Activated CD4-positive, alpha-beta T cell treated with anti-CD3 and anti-CD28 coated beads, Interleukin-2, amount 10 ng/mL, durations not matched to agents 24 days and 14 days (primary cell): ENCODE measurements at regions of chr15 and their contacts with region 1.

Region 1: GRCh38 chr15:63891079-63891767 is 57.5 kb upstream of the HERC1 start:
- DNase-seq: peak; percentile 92
- H3K4me3 Mint-ChIP-seq: peak overlapping the region; percentile 68
- H3K27ac Mint-ChIP-seq: peak overlapping the region; percentile 27
- H3K4me1 Mint-ChIP-seq: peaks cover 53% of the 10 kb centered on the region
- H3K27me3 Mint-ChIP-seq: no peaks in the 10 kb centered on the region

Region 2: GRCh38 chr15:63668601-63669000 is 222.6 kb before region 1 on chr15:
- intact Hi-C with region 1: loop called (anchors 5 kb)
- DNase-seq: no peak
- H3K4me3 Mint-ChIP-seq: peak overlapping the region; percentile 80
- H3K27ac Mint-ChIP-seq: peak overlapping the region; percentile 81
- H3K4me1 Mint-ChIP-seq: peaks cover 43% of the 10 kb centered on the region
- H3K27me3 Mint-ChIP-seq: no peaks in the 10 kb centered on the region

Region 3: DNA sequence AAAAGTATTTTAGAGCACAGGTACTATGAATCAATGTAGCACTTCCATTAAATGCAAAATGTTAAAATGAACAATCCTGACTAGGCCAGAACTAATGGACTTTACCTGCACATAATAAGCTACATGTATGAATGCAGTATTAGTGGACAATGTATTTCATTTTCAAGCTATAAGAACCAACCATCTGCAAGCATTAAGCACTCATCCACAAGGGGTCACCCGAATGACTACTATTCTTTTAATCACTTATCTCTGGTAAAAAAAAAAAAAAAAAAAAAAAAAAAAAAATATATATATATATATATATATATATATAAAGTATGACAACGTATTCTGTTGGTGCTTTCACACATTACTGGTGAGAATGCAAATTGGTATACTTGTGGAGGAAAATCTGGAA is 64.7 kb before region 1 on chr15:
- intact Hi-C with region 1: loop called (anchors 1 kb)
- DNase-seq: peak; percentile 67
- H3K4me3 Mint-ChIP-seq: peak overlapping the region; percentile 67
- H3K27ac Mint-ChIP-seq: peak overlapping the region; percentile 78
- H3K4me1 Mint-ChIP-seq: peaks cover 55% of the 10 kb centered on the region
- H3K27me3 Mint-ChIP-seq: no peaks in the 10 kb centered on the region

Region 4: GRCh38 chr15:63870403-63871209 is 20.6 kb before region 1 on chr15:
- intact Hi-C with region 1: loop called (anchors 1 kb)
- DNase-seq: no peak
- H3K4me3 Mint-ChIP-seq: no peak overlapping the region
- H3K27ac Mint-ChIP-seq: no peak overlapping the region
- H3K4me1 Mint-ChIP-seq: peaks cover 19% of the 10 kb centered on the region
- H3K27me3 Mint-ChIP-seq: no peaks in the 10 kb centered on the region

Region 5: DNA sequence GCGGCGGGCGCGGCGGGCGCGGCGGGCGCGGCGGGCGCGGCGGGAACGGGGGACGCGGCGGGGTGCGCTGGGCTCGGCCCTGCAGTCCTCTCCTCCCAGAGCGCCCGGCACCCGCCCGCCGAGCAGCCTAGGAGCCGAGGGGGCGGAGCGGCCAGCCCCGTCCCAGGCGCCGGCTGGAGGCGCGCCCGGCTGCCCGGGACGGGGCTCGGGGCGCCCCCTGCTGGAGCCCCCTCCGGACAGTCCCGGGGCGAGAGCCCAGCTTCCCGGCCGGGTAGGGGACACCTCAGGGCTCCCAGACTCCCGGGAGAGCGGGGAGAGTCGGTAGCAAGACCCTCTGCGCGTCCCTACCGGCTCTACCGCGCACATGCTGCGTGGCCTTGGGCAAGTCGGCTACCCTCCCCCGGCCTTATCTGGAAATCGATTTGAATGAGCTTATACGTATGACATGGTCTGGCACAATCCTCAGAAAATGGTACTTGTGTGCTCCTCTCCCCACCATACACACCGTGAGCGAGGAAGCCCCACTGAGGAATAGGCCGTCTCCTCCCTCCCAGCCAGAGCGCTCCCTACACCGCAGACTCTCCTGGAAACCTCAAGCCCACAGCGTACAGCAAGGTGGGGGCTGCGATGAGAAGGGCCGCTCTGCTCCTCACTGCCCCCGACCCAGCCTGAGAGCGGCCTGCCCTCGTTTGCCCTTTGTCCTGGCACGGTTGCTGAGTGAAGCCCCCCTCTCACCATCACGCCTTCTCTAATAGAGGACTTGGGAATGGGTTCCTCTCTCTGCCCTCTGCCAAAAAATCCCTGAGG is 155.3 kb after region 1 on chr15 and contains the start of gene DAPK2:
- intact Hi-C with region 1: loop called (anchors 1 kb)
- DNase-seq: peak; percentile 93
- H3K4me3 Mint-ChIP-seq: peak within 1 kb of the TSS; percentile 79
- H3K27ac Mint-ChIP-seq: peak within 1 kb of the TSS; percentile 25
- H3K4me1 Mint-ChIP-seq: peaks cover 20% of the 10 kb centered on the region
- H3K27me3 Mint-ChIP-seq: peaks cover 34% of the 10 kb centered on the region
- total RNA-seq, gene DAPK2: 3.7 and 4.3 TPM in 2 replicates